ENCODE measurements at regions of chr16 and their contacts with region 1.

Region 1: GRCh38 chr16:71883849-71884638 is at the start of gene ZNF821:
- DNase-seq: peak; percentile 78 to 85
- ATAC-seq: peak; percentile 72 to 86
- H3K4me3 ChIP-seq: peak within 1 kb of the TSS; percentile 85
- H3K27ac ChIP-seq: peak within 1 kb of the TSS; percentile 84 to 96
- H3K4me1 ChIP-seq: peaks cover 11% of the 10 kb centered on the region
- CTCF ChIP-seq: peak; percentile 39
- EP300 ChIP-seq: no peak
- POLR2A ChIP-seq: peak; percentile 49
- RAD21 ChIP-seq: no peak; a peak in 1 of 5 replicates
- polyA plus RNA-seq, gene ZNF821: 3.6 and 4.5 TPM in 2 replicates

Region 2: GRCh38 chr16:71830359-71830758 is 53.7 kb before region 1 on chr16:
- CTCF ChIA-PET with region 1: interaction called, 11 read pairs
- POLR2A ChIA-PET with region 1: no interaction called
- DNase-seq: no peak
- ATAC-seq: no peak
- H3K4me3 ChIP-seq: no peak overlapping the region
- H3K27ac ChIP-seq: no peak overlapping the region
- H3K4me1 ChIP-seq: no peaks in the 10 kb centered on the region
- CTCF ChIP-seq: no peak
- EP300 ChIP-seq: no peak
- POLR2A ChIP-seq: no peak
- RAD21 ChIP-seq: no peak

Region 3: GRCh38 chr16:71853413-71853812 is 30.6 kb before region 1 on chr16:
- CTCF ChIA-PET with region 1: interaction called, 19 read pairs
- POLR2A ChIA-PET with region 1: no interaction called
- DNase-seq: no peak
- ATAC-seq: no peak
- H3K4me3 ChIP-seq: no peak overlapping the region
- H3K27ac ChIP-seq: no peak overlapping the region
- H3K4me1 ChIP-seq: peaks cover 2% of the 10 kb centered on the region; the same call in 1 of the 3 replicates
- CTCF ChIP-seq: no peak
- EP300 ChIP-seq: no peak
- POLR2A ChIP-seq: no peak
- RAD21 ChIP-seq: no peak

Region 4: GRCh38 chr16:71867939-71868338 is 16.1 kb before region 1 on chr16:
- CTCF ChIA-PET with region 1: interaction called, 44 read pairs
- POLR2A ChIA-PET with region 1: no interaction called
- DNase-seq: no peak
- ATAC-seq: no peak
- H3K4me3 ChIP-seq: no peak overlapping the region
- H3K27ac ChIP-seq: no peak overlapping the region
- H3K4me1 ChIP-seq: no peaks in the 10 kb centered on the region
- CTCF ChIP-seq: no peak
- EP300 ChIP-seq: no peak
- POLR2A ChIP-seq: no peak
- RAD21 ChIP-seq: no peak

Region 5: GRCh38 chr16:71912534-71913253 is 28.6 kb after region 1 on chr16:
- CTCF ChIA-PET with region 1: no interaction called
- POLR2A ChIA-PET with region 1: no interaction called
- DNase-seq: no peak
- ATAC-seq: no peak
- H3K4me3 ChIP-seq: no peak overlapping the region
- H3K27ac ChIP-seq: no peak overlapping the region
- H3K4me1 ChIP-seq: no peaks in the 10 kb centered on the region
- CTCF ChIP-seq: no peak
- EP300 ChIP-seq: no peak
- POLR2A ChIP-seq: no peak
- RAD21 ChIP-seq: no peak

Region 6: DNA sequence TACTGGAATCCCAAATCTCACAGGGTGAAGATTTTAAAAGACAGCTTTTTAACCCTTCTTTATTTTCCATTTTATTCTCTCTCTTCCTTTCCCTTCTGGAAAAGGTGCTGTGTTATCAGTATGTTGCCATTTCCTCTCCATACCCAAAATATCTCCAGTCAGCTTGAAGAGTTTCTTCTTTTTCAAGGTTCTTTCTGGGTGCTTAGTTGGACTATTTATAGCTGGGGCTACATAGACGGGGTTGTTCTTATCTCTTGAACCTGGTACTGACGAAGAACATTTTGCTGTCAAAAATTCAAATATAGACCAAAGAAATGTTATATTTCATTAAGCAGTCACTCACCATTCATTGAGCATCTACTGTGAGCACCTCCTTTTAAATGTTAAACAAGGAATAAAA is 59.8 kb after region 1 on chr16:
- CTCF ChIA-PET with region 1: no interaction called
- POLR2A ChIA-PET with region 1: no interaction called
- DNase-seq: no peak
- ATAC-seq: no peak
- H3K4me3 ChIP-seq: no peak overlapping the region
- H3K27ac ChIP-seq: no peak overlapping the region
- H3K4me1 ChIP-seq: no peaks in the 10 kb centered on the region
- CTCF ChIP-seq: no peak
- EP300 ChIP-seq: no peak
- POLR2A ChIP-seq: no peak
- RAD21 ChIP-seq: no peak

Region 7: DNA sequence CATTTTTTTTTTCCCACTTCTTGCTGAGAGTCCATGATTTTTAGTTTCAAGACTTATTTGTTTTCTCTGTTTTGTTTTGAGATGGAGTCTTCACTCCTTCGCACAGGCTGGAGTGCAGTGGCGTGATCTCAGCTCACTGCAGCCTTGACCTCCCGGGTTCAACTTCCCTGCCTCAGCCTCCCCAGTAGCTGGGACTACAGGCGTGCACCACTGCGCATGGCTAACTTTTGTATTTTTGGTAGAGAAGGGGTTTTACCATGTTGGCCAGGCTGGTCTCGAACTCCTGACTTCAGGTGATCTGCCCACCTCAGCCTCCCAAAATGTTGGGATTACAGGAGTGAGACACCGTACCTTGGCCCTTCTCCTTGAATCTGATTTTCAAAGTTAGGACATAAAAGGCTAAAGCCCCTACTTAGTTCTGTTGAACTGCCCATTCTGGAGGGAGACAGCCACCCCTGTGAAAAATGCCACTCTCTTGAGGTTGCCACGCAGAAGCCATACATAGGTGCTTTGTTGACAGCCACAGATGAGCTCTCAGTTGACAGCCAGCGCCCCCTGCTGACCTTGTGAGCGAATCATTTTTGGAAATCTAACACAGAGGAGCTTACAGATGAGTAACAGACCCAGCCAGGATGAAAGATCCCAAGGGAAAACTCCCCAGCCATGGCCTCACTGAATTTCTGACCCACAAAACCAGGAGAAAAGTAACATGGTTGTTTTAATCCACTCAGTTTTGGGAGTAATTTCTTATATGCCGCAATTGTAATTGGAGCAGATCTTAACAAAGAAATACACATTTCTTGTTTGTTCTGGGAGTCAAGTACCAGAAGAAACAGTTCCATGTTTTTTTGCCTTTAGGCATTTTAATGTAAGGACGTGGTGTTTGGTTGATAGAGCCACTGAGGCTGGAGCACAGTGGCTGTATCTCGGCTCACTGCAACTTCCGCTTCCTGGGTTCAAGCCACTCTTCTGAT is 77.3 kb after region 1 on chr16:
- CTCF ChIA-PET with region 1: interaction called, 19 read pairs
- POLR2A ChIA-PET with region 1: no interaction called
- DNase-seq: peak; percentile 77 to 88
- ATAC-seq: peak; percentile 98 to 99
- H3K4me3 ChIP-seq: no peak overlapping the region
- H3K27ac ChIP-seq: no peak overlapping the region
- H3K4me1 ChIP-seq: no peaks in the 10 kb centered on the region
- CTCF ChIP-seq: peak; percentile 79
- EP300 ChIP-seq: no peak
- POLR2A ChIP-seq: no peak
- RAD21 ChIP-seq: peak; percentile 81 to 91

Measured in A549 (cell line).